HEK293T (cell line): ENCODE measurements at regions of chr11 and their contacts with region 1.

Region 1: GRCh38 chr11:6603287-6604080 is at the starts of genes ILK and RRP8:
- DNase-seq: peak; percentile 91

Region 2: DNA sequence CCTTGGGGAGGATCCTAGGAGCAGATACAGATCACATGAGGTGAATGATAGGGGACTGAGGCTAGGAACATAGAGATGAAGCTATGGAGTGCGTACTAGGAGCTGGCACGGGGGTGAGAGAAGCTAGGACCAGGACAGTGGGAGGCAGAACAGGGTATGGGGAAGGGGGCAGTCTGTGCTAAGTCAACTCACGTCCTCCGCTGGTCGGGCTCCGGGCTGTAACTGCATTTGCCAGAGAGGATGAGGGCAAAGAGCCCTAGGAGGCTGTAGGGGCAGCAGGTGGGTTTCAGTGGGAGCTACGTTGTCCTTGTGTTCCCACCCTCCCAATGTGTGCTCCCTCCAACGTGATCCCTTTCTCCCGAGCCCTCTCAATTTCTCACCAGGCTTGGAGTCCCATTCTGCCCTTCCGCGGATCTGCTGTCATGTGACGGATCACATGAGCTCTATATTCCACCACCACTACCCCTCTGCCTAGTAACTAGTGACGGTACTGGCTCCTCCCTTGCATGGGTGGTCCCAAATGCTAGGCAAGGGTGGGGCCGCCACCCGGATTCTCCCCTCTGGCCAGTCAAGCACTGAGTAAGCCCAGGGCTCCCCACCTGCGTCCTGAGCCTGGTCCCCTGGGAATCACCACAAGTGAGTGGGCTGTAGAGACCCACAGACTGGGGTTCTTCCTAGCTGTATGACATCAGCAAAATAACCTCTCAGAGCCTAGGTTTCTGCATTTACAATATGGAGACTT is 15.7 kb after region 1 on chr11 and contains the start of gene TPP1:
- CTCF ChIA-PET with region 1: no interaction called
- POLR2A ChIA-PET with region 1: interaction called, 13 read pairs
- DNase-seq: peak; percentile 97